ENCODE measurements at regions of chr22 and their contacts with region 1.

Region 1: GRCh38 chr22:21612865-21613265 is 17.0 kb downstream of the YDJC start:
- DNase-seq: no peak
- H3K4me3 ChIP-seq: no peak overlapping the region
- H3K27ac ChIP-seq: no peak overlapping the region
- H3K4me1 ChIP-seq: no peaks in the 10 kb centered on the region; a peak in 1 of 4 replicates
- H3K27me3 ChIP-seq: no peaks in the 10 kb centered on the region
- CTCF ChIP-seq: no peak
- EP300 ChIP-seq: no peak
- RAD21 ChIP-seq: no peak

Region 2: DNA sequence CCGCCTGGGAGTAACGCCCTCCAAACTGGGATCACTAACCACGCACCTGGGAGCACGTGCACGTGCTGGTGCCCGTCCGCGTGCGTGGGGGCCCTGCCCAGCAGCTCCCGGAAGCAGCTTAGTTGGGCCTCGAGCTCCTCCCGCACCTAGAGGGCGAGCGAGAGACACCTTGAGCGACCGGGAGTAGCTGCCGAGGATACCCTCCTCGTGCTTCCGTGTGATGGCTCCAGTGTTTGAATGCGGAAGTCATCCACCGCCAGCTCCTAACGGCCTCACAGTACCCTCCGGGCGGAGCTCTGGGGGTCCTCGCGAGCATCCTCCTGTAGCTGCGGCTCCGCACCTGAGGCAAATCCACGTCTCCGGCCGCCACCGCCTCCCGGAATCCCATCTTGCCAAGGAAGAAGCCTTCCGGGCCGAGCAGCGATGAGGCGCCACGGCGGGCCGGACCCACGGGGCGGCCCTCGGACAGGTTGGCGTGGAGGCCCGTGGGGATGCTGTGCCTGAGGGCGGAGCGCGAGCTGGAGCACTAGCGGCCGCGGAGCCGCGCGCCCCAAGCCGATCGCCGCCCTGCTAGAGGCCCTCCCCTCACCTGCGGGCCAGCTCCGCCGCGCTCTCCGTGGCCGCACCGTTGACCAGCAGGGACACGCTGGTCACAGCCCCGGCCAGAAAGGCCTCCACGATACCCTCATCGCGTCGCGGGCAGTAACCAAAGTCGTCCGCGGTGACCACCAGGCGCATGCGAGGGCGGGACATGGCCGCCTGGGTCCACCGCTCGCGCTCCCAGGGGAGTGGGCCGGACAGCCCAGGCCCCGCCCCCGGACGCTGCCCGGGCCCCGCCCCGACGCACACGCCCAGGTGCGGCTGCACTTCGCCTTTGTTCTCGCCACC is 16.6 kb after region 1 on chr22 and contains the start of gene YDJC:
- CTCF ChIA-PET with region 1: interaction called, 19 read pairs
- POLR2A ChIA-PET with region 1: no interaction called
- DNase-seq: peak; percentile 99
- H3K4me3 ChIP-seq: peak within 1 kb of the TSS; percentile 90 to 97
- H3K27ac ChIP-seq: peak within 1 kb of the TSS; percentile 74 to 79
- H3K4me1 ChIP-seq: peaks cover 6 to 19% of the 10 kb centered on the region in 2 experiments; a peak in 1 of 4 replicates
- H3K27me3 ChIP-seq: no peaks in the 10 kb centered on the region
- CTCF ChIP-seq: peak; percentile 61
- EP300 ChIP-seq: no peak
- RAD21 ChIP-seq: peak; percentile 49; the same call in 1 of the 2 replicates
- polyA plus RNA-seq, gene YDJC: 37.4 and 39.9 TPM in 2 replicates

Region 3: DNA sequence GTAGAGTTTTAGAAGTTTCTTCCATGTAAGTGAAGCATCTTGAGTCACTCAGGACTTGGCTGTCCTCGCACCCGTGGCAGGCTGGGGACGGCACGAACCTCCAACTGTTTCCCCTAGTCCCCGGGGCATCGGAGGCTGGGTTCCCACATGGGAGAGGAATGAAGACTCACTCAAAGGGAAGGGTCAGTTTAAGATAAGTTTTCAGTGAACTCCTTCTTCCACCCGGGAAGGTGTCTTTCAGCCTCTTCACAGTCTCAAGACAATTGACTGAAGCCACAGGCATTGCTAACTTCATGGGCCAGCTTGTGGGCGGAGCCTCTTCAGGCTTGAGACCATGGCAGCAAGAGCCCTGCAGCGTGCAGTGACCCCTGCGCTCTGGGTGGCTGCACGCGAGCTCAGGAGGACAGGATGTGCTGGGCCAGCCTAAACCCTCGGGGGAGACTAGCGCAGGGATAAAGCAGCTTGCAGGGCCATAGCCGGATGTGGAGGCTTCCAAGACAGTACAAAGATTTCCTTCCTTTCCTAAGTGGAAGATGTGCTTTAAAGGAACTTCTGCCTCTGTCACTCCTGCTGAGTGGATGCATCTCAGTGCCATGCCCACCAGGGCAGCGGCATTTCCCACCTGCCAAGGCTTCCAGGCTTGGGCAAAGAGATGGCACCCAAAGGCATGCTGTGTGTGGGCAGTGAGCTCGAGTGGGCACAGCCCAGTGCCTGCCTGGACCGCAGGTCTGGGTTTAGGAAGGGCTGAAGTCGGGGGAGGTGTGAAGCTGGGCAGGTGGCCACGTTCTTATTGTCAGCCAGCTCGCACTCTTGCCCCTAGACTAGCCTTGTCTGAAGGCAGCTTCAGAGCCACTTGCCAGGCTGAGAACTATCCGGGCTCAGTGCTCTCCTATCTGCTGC is 85.8 kb after region 1 on chr22:
- CTCF ChIA-PET with region 1: no interaction called
- POLR2A ChIA-PET with region 1: no interaction called
- DNase-seq: no peak
- H3K4me3 ChIP-seq: no peak overlapping the region
- H3K27ac ChIP-seq: peak overlapping the region in 1 of 2 experiments; percentile 65; a peak in 2 of 4 replicates
- H3K4me1 ChIP-seq: peaks cover 0 to 8% of the 10 kb centered on the region in 2 experiments; a peak in 2 of 4 replicates
- H3K27me3 ChIP-seq: no peaks in the 10 kb centered on the region
- CTCF ChIP-seq: no peak
- EP300 ChIP-seq: no peak
- RAD21 ChIP-seq: no peak

Measured in SK-N-SH (cell line).